ENCODE measurements at regions of chr10 and their contacts with region 1.

Region 1: GRCh38 chr10:30413996-30414576 is 19.9 kb upstream of the MAP3K8 start:
- DNase-seq: peak; percentile 63
- ATAC-seq: peak; percentile 49
- H3K4me3 Mint-ChIP-seq: no peak overlapping the region
- H3K27ac Mint-ChIP-seq: no peak overlapping the region
- H3K4me1 Mint-ChIP-seq: peaks cover 35% of the 10 kb centered on the region
- H3K27me3 Mint-ChIP-seq: no peaks in the 10 kb centered on the region

Region 2: GRCh38 chr10:30186371-30186875 is 227.7 kb before region 1 on chr10:
- CTCF ChIA-PET with region 1: no interaction called
- POLR2A ChIA-PET with region 1: no interaction called
- DNase-seq: no peak
- ATAC-seq: no peak
- H3K4me3 Mint-ChIP-seq: no peak overlapping the region
- H3K27ac Mint-ChIP-seq: no peak overlapping the region
- H3K4me1 Mint-ChIP-seq: no peaks in the 10 kb centered on the region
- H3K27me3 Mint-ChIP-seq: peaks cover 2% of the 10 kb centered on the region

Region 3: DNA sequence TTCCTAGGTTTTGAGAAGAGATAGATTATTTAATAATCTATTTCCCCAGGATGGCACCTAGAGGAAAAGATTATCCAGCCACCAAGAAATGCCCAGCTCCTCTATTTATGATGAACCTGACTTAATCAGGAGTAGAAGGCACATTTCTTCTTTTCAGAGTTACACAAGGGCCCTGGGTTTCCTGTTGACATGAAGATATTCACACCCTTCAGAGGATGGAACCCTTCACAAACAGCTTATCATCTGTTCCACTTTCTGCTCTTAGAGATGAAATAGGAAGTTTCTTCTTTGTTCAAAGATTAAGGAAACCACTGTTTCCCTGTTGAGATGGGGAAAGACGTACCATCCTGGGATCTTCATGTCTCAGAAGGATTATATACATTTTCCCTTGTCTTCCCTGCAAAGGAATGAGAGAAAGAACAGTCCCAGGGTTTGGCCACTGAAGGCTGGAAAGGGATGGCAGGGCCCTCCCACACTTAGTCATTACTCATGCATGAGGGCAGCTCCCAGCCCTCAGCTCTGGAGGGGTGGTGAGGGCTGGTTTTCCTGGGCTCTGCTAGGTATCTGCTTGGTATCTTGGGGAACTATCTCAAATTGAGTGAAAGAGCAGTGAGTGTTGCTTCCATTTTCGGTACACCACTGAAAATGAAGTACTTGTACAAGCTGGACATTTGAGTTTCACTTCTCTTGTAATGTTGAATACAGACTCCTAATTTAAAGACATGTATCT is 129.1 kb before region 1 on chr10:
- CTCF ChIA-PET with region 1: no interaction called
- POLR2A ChIA-PET with region 1: no interaction called
- DNase-seq: no peak
- ATAC-seq: no peak
- H3K4me3 Mint-ChIP-seq: no peak overlapping the region
- H3K27ac Mint-ChIP-seq: no peak overlapping the region
- H3K4me1 Mint-ChIP-seq: peaks cover 7% of the 10 kb centered on the region
- H3K27me3 Mint-ChIP-seq: no peaks in the 10 kb centered on the region

Region 4: GRCh38 chr10:30398788-30399187 is 15.3 kb before region 1 on chr10:
- CTCF ChIA-PET with region 1: interaction called, 10 read pairs
- POLR2A ChIA-PET with region 1: no interaction called
- DNase-seq: no peak
- ATAC-seq: peak; percentile 38
- H3K4me3 Mint-ChIP-seq: no peak overlapping the region
- H3K27ac Mint-ChIP-seq: no peak overlapping the region
- H3K4me1 Mint-ChIP-seq: peaks cover 45% of the 10 kb centered on the region
- H3K27me3 Mint-ChIP-seq: peaks cover 11% of the 10 kb centered on the region

Region 5: GRCh38 chr10:30433730-30434272 is 19.7 kb after region 1 on chr10 and contains the start of gene MAP3K8:
- CTCF ChIA-PET with region 1: interaction called, 19 read pairs
- POLR2A ChIA-PET with region 1: interaction called, 5 read pairs
- DNase-seq: peak; percentile 85
- ATAC-seq: peak; percentile 80
- H3K4me3 Mint-ChIP-seq: peak within 1 kb of the TSS; percentile 92
- H3K27ac Mint-ChIP-seq: peak within 1 kb of the TSS; percentile 86
- H3K4me1 Mint-ChIP-seq: peaks cover 60% of the 10 kb centered on the region
- H3K27me3 Mint-ChIP-seq: no peaks in the 10 kb centered on the region
- total RNA-seq, gene MAP3K8: 26.0 to 27.7 TPM

Region 6: DNA sequence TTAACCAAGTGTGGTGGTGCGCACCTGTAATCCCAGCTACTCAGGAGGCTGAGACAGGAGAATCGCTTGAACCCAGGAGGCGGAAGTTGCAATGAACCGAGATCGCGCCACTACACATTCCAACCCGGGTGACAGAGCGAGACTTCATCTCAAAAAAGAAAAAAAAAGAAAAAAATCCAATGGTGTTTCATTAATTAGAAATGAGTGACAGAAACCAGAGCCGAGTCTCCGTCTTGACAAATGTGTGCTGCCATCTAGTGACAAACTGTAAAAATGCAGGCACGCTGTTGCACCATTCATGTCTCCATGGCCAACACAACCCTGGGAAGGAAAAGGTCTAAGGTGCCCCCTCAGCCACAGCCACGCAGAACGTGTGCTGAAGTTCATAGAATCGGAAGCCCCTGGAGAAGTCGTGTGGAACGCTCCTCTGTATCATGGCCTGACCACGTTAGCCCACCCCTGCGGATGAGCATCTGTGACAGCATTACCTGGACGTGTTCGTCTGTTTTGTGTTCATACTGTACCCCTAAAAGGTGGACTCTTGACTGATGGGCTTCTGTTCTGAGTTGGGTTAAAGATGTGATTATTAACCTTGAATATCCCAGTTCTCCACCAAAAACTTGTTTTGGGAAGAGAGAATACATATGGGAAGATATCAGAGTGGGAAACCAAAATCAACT is 120.5 kb after region 1 on chr10:
- CTCF ChIA-PET with region 1: interaction called, 106 read pairs
- POLR2A ChIA-PET with region 1: interaction called, 10 read pairs
- DNase-seq: peak; percentile 86
- ATAC-seq: peak; percentile 48
- H3K4me3 Mint-ChIP-seq: no peak overlapping the region
- H3K27ac Mint-ChIP-seq: no peak overlapping the region
- H3K4me1 Mint-ChIP-seq: peaks cover 59% of the 10 kb centered on the region
- H3K27me3 Mint-ChIP-seq: no peaks in the 10 kb centered on the region

Region 7: GRCh38 chr10:30619966-30620365 is 205.9 kb after region 1 on chr10:
- CTCF ChIA-PET with region 1: no interaction called
- POLR2A ChIA-PET with region 1: no interaction called
- DNase-seq: no peak
- ATAC-seq: no peak
- H3K4me3 Mint-ChIP-seq: no peak overlapping the region
- H3K27ac Mint-ChIP-seq: no peak overlapping the region
- H3K4me1 Mint-ChIP-seq: no peaks in the 10 kb centered on the region
- H3K27me3 Mint-ChIP-seq: peaks cover 25% of the 10 kb centered on the region